Ovary (tissue), 10 donors: ENCODE measurements at regions of chr7 and their contacts with region 1.

Region 1: GRCh38 chr7:138738551-138739335 is 37.6 kb upstream of the SVOPL start:
- DNase-seq: peak; percentile 82 to 93 (median 88)
- H3K4me3 ChIP-seq: no peak overlapping the region
- H3K27ac ChIP-seq: peak overlapping the region in 1 of 2 donors; percentile 43
- H3K4me1 ChIP-seq: no peaks in the 10 kb centered on the region
- H3K27me3 ChIP-seq: no peaks in the 10 kb centered on the region
- CTCF ChIP-seq: peak; percentile 66 to 82 (median 75)
- EP300 ChIP-seq: no peak
- POLR2A ChIP-seq: no peak

Region 2: GRCh38 chr7:137916980-137917645 is 821.6 kb before region 1 on chr7:
- intact Hi-C with region 1: loop called in 1 of 4 experiments (anchors 10 kb)
- DNase-seq: no peak
- H3K4me3 ChIP-seq: no peak overlapping the region
- H3K27ac ChIP-seq: no peak overlapping the region
- H3K4me1 ChIP-seq: no peaks in the 10 kb centered on the region
- H3K27me3 ChIP-seq: no peaks in the 10 kb centered on the region
- CTCF ChIP-seq: no peak
- EP300 ChIP-seq: no peak
- POLR2A ChIP-seq: no peak

Region 3: DNA sequence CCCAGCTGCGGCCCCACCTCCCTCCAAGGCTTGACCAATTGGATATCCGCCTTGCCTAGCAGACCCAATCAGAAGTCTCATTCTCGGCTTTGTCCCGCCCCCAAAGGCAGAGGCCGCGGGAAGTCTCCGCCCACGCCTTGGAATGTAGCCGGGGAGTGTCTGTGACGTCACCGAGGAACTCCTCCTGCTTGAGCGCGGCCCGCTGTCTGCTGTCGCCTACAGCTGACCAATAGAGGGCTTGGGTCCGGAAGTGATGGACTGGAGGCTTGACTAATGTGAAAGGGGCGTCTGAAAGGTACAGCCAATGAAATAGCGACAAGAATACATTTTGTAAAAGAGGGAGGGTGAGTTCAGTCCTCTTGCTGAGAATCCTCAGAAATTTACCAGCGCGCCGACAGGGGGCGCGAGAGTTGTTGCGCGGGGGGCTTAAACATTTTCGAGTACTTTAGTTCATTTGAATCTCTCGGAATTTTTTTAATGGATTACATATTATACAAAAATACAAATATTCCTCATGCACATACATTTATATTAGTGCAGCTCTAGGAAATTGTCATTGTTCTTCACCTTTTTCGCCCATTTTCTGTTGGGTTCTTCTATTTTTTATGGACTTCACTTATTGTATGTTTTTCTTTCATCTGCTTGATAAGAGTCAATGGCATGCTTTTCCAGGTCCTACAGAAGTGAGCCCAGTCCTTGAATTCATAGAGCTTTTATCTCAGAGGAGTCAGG is 736.5 kb before region 1 on chr7:
- intact Hi-C with region 1: loop called in 1 of 4 experiments (anchors 10 kb)
- DNase-seq: peak; percentile 99 to 100 (median 100)
- H3K4me3 ChIP-seq: peak overlapping the region; percentile 80
- H3K27ac ChIP-seq: peak overlapping the region in 1 of 2 donors; percentile 95
- H3K4me1 ChIP-seq: peaks cover 3% of the 10 kb centered on the region
- H3K27me3 ChIP-seq: no peaks in the 10 kb centered on the region
- CTCF ChIP-seq: peak; percentile 85 to 88 (median 88)
- EP300 ChIP-seq: peak; percentile 64
- POLR2A ChIP-seq: no peak

Region 4: DNA sequence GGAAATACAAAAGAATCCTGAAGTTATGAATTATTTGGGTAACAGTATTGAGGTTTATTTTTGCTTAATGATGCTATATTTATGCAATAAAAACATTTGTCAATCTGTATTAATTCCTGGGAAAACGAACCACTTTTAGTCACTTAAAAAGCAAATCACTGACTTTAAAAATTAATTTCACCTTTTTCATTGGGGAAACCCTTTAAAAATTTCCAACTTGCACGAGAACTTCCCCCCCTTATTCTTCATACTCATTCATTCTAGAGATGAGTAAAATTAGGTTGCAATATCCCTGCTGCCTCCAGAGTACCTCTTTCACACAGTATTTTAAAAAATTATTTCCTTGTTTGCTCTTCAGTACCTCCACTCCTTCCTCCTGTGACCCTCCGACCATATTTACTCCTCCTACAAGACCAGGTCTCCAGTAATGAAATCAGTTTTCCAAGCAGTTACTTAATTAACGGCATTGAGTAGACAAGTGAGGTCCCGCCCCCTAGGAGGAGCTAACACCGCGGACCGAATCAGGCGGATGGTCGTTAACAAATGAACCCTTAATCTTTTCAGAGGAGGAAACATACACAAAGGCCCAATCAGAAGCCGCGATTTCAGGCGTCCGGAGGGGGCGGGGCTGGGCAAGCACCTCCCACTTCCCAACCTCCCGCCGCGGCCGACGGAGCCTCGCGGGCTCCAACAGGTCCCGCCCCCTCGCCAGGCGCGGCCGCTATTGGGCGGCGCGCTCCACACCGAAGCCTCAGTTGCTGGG is 279.1 kb before region 1 on chr7:
- intact Hi-C with region 1: loop called in 1 of 4 experiments (anchors 10 kb)
- DNase-seq: peak in 4 of 5 donors; percentile 97 to 99 (median 98)
- H3K4me3 ChIP-seq: peak overlapping the region; percentile 33
- H3K27ac ChIP-seq: no peak overlapping the region
- H3K4me1 ChIP-seq: peaks cover 4% of the 10 kb centered on the region
- H3K27me3 ChIP-seq: no peaks in the 10 kb centered on the region
- CTCF ChIP-seq: peak; percentile 10 to 52 (median 52)
- EP300 ChIP-seq: no peak
- POLR2A ChIP-seq: no peak